ENCODE measurements at regions of chr2 and their contacts with region 1.

Region 1: DNA sequence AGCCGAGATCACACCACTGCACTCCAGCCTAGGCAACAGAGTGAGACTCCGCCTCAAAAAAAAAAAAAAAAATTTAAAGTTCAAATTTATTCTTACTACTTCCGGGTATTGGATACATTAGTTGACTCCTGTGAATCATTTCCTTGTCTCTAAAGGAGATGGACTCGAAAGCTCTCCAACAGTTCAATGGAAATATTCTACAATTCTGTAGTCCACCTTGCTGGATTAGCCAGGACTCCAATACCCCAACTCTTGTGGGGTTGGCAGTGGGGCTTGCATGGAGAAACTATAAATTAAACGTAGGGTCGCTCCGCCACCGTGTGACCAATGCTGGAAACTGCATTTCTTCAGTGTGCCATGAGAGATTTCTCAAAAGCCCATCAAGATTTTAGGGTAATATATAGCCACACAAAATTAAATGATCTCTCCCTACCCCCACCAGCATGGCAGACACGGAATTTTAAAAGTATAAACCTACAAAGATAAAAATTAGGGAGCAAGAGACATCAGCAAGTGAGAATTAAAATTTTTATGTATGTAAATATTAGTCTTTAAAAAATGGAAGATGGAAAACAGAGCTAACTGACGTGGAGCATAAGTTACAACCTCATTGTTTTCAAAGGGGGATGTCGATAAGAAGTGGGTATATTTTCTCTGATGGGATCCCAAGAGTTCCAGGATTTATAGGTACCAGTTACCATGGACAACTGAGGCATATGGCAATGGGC is 27.8 kb upstream of the GAREM2 start:
- DNase-seq: peak; percentile 70
- CTCF ChIP-seq: peak; percentile 84

Region 2: DNA sequence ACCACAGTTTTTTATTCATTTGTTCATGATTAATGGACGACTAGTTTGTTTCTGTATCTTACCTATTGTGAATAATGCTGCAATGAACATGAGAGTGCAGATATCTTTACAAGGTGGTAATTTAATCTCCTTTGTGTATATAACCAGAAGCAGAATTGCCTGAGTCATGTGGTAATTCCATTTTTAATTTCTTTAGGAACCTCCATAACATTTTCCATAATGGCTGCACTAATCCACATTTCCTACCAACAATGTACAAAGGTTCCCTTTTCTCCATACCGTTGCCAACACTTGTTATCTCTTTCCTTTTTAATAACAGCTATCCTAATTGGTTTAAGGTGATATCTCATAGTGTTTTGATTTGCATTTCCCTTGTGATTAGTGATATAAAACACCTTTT is 1617.6 kb before region 1 on chr2:
- CTCF ChIA-PET with region 1: no interaction called
- POLR2A ChIA-PET with region 1: no interaction called
- DNase-seq: no peak
- CTCF ChIP-seq: no peak

Region 3: DNA sequence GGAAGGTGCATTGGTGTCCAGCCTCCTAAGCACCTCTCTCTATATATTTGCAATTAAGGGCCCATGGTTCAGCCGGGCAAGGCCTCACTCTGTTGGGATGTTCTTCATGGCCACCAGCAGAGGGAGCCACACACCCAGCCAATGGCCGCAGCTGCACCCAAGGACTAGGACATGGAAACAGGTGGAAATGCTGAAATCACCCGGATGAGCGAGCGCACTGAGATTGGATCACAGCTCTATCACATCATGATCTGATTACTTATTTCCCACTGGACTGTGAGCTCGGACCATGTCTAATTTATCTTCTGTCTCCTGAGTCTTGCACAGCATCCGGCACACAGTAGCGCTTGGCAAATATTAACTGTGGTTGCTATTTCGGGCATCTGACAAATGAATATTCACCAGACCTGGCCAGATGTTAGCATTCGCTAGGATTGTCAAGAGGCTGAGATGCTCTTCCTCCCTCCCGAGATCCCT is 194.0 kb before region 1 on chr2:
- CTCF ChIA-PET with region 1: interaction called, 24 read pairs
- POLR2A ChIA-PET with region 1: no interaction called
- DNase-seq: peak; percentile 84
- CTCF ChIP-seq: peak; percentile 93

Region 4: DNA sequence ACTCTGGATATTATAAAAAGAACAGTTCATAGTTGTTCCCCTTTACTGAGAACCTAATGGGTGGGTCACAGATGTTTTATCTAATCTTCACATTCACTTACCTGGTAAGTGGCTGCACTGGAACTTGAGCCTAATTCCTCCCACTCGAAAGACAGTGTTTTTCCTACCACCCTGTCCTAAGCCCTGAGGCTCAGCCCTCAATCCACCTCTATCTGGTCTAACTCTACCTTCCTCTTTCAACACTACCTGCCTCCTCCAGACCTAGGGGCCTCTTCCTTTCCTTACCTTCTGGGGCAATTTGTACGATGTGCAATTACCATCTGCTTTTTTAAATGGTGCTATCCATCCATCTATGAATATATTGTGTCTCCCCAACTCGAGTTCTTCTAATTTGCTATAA is 153.2 kb before region 1 on chr2:
- CTCF ChIA-PET with region 1: interaction called, 69 read pairs
- POLR2A ChIA-PET with region 1: no interaction called
- DNase-seq: no peak
- CTCF ChIP-seq: no peak

Region 5: DNA sequence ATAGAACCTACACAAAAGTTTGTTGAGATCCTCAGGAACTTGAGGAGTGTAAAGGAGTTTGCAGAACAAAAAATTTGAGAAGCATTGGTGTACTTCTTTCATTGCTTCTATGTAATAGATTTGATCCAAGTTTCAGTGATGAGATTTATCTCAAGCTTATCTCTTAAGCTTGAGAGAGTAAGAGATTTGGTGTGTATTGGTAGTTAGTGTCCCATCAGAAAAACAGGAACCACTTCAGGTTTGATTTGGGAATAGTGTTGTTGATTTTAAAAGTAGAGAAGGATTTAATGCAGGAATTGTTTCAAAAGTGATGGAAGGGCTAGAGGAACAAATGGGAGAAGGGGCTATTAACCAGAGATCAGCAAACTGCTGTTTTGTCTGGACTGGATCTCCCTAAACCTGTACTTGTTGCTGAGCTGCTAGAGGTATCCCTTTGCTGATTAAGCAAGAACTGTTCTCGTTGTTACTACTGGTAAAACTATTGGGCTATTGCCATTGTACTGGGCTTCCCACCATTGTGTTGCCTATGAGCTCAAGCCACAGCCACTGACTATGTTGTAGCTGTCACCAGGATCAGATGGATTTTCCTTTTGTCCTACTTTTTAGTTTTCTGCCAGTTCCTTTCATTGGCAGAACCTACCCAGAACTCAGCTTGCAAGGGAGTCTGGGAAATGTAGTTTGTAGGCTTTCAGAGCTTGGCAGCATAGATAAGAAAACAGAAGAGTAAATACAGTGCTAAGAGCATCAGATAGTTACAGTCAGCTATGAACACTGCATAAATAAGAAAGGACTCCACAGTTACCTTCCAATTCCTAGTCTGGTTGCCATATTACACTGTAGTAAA is 72.0 kb before region 1 on chr2:
- CTCF ChIA-PET with region 1: interaction called, 10 read pairs
- POLR2A ChIA-PET with region 1: no interaction called
- DNase-seq: no peak
- CTCF ChIP-seq: no peak

Region 6: DNA sequence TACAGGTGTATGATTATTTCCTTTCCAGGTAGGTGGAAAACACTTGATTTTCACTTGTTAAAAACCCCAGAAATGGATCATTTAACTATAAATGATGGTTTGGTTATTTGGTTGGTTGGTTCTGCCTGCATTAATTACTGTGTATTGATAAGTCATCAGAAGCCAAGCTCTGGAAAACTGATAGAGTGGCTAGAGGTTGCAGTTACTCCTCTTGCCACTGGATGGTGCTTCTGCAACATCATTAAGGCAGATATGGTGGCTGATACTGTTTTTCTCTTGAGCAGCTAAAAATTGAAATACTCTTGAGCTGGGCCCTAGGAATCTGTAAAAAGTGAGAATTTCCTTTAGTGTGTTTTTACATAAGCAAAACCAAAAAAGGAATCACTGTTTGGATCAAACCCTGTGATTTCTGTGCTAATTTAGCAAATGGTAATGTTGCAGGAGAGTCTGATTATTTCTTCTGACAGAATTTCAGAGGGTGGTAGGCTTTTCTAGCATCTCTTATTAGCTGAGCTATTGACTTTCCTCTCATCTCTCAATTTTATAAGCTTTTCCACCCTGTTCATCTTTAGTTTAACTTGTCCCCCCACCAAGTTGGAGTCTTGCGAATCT is 57.0 kb before region 1 on chr2:
- CTCF ChIA-PET with region 1: interaction called, 16 read pairs
- POLR2A ChIA-PET with region 1: no interaction called
- DNase-seq: peak; percentile 46
- CTCF ChIP-seq: peak; percentile 62

Region 7: GRCh38 chr2:26274058-26274613 is 129.0 kb after region 1 on chr2:
- CTCF ChIA-PET with region 1: no interaction called
- POLR2A ChIA-PET with region 1: no interaction called
- DNase-seq: no peak
- CTCF ChIP-seq: no peak

Region 8: GRCh38 chr2:26284136-26284535 is 139.0 kb after region 1 on chr2:
- CTCF ChIA-PET with region 1: no interaction called
- POLR2A ChIA-PET with region 1: no interaction called
- DNase-seq: no peak
- CTCF ChIP-seq: no peak